Naive thymus-derived CD8-positive, alpha-beta T cell (primary cell): ENCODE measurements at regions of chr6 and their contacts with region 1.

Region 1: GRCh38 chr6:42984001-42984923 is at the start of gene PPP2R5D:
- DNase-seq: peak; percentile 86 to 99 (median 97)
- ATAC-seq: peak; percentile 93
- H3K4me3 Mint-ChIP-seq: peak within 1 kb of the TSS; percentile 91 to 99 (median 94)
- H3K27ac Mint-ChIP-seq: peak within 1 kb of the TSS; percentile 96 to 99 (median 97)
- H3K4me1 Mint-ChIP-seq: peaks cover 40 to 66% (median 62%) of the 10 kb centered on the region in 4 donors
- H3K27me3 Mint-ChIP-seq: no peaks in the 10 kb centered on the region
- polyA plus RNA-seq, gene PPP2R5D: 11.6 to 29.8 (median 17.6) TPM

Region 2: GRCh38 chr6:42970871-42971612 is 13.2 kb before region 1 on chr6:
- POLR2A ChIA-PET with region 1: interaction called, 18 read pairs
- DNase-seq: no peak
- ATAC-seq: no peak
- H3K4me3 Mint-ChIP-seq: no peak overlapping the region
- H3K27ac Mint-ChIP-seq: peak overlapping the region in 3 of 10 donors; percentile 49 to 53 (median 50)
- H3K4me1 Mint-ChIP-seq: peaks cover 9 to 25% (median 14%) of the 10 kb centered on the region in 4 donors
- H3K27me3 Mint-ChIP-seq: no peaks in the 10 kb centered on the region

Region 3: DNA sequence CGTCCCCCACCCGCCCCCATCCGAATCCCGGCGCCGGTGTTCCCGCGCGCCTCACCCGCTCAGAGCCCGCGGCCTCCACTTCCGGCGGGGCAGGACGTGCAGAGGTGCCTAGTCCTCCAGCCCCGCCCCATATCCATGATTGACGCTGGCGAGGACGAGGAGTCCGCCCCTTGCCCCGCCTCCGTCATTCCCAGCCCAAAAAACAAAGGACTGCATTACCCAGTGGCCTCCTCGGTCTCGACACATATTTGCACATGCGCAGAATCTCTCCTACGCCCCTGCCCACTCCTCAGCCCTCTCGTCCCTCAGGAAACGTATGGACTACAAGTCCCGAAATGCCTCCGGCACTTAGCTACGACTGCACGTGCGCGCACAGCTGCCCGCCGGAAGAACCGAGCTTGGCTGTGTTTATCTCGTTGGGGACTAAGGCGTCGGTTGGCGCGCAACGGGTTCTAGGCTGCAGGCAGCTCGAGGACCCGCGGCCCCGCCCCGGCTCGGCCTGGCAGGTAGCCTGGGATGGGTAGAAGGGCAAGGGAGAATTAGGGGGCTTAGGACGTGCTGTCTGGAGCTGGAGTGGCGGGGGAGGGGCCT is 29.7 kb after region 1 on chr6 and contains the starts of genes KLHDC3 and MEA1:
- POLR2A ChIA-PET with region 1: interaction called, 81 read pairs
- DNase-seq: peak; percentile 93 to 100 (median 99)
- ATAC-seq: peak; percentile 92
- H3K4me3 Mint-ChIP-seq: peak within 1 kb of the TSS; percentile 89 to 97 (median 94)
- H3K27ac Mint-ChIP-seq: peak within 1 kb of the TSS; percentile 82 to 98 (median 95)
- H3K4me1 Mint-ChIP-seq: peaks cover 52 to 82% (median 68%) of the 10 kb centered on the region in 4 donors
- H3K27me3 Mint-ChIP-seq: no peaks in the 10 kb centered on the region
- polyA plus RNA-seq, gene KLHDC3: 107 to 136 (median 117) TPM
- polyA plus RNA-seq, gene MEA1: 73.4 to 90.9 (median 77.5) TPM

Region 4: GRCh38 chr6:43021270-43022047 is 37.2 kb after region 1 on chr6 and contains the start of gene RRP36:
- POLR2A ChIA-PET with region 1: interaction called, 81 read pairs
- DNase-seq: peak; percentile 39 to 76 (median 58)
- ATAC-seq: peak; percentile 83 to 88
- H3K4me3 Mint-ChIP-seq: peak within 1 kb of the TSS; percentile 95 to 99 (median 98)
- H3K27ac Mint-ChIP-seq: peak within 1 kb of the TSS; percentile 68 to 97 (median 93)
- H3K4me1 Mint-ChIP-seq: peaks cover 34 to 50% (median 48%) of the 10 kb centered on the region in 4 donors
- H3K27me3 Mint-ChIP-seq: no peaks in the 10 kb centered on the region
- polyA plus RNA-seq, gene RRP36: 52.7 to 74.5 (median 57.8) TPM

Region 5: GRCh38 chr6:43053545-43054205 is 69.4 kb after region 1 on chr6 and contains the start of gene CUL7:
- POLR2A ChIA-PET with region 1: interaction called, 24 read pairs
- DNase-seq: peak; percentile 81 to 94 (median 86)
- ATAC-seq: peak; percentile 99
- H3K4me3 Mint-ChIP-seq: peak within 1 kb of the TSS; percentile 88 to 97 (median 94)
- H3K27ac Mint-ChIP-seq: peak within 1 kb of the TSS; percentile 80 to 98 (median 96)
- H3K4me1 Mint-ChIP-seq: peaks cover 34 to 54% (median 53%) of the 10 kb centered on the region in 4 donors
- H3K27me3 Mint-ChIP-seq: no peaks in the 10 kb centered on the region
- polyA plus RNA-seq, gene CUL7: 1.6 to 3.5 (median 1.6) TPM

Region 6: DNA sequence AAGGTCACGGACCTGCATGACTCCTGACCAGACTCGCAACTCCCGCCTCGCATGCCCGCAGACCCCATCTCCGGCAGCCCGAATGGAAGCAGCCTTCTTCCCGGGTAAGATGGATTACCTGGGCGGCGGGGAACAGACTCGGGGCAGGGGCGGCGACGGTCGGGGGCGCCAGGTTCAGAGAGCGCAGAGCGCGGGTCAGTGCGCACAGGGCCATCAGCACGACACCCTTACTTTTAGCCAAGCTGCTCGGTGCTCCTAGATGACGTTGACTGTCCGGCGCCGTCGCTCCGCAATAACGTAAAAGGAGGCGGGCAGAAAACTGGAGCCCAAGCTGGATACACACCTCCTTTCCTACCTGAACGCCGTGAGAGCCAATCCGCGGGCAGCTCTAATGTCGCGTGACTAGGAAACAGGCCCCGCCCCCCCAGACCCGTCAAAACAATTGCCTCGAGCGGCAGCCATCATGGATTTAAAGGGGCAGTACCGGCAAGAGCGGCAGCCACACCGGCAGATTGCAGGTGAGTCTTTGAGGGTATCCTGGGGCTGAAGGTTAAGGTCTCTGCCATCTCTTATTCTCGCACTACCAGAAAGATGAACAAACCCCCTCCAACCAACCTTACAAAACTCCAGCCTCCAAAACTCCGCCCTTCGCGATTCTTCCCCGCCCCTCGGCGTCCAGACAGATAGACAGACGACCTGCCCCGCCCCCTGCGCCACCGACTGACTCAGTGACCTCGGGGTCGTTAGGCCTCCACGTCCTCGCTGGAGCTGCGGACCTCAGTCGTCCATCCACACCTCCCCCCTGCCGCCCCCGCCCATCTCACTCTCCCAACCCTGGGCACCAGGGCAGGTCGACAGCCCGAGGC is 75.1 kb after region 1 on chr6 and contains the starts of genes KLC4 and MRPL2:
- POLR2A ChIA-PET with region 1: interaction called, 24 read pairs
- DNase-seq: peak; percentile 91 to 98 (median 96)
- ATAC-seq: peak; percentile 94 to 98
- H3K4me3 Mint-ChIP-seq: peak within 1 kb of the TSS; percentile 93 to 99 (median 95)
- H3K27ac Mint-ChIP-seq: peak within 1 kb of the TSS; percentile 96 to 100 (median 99)
- H3K4me1 Mint-ChIP-seq: peaks cover 17 to 49% (median 40%) of the 10 kb centered on the region in 4 donors
- H3K27me3 Mint-ChIP-seq: no peaks in the 10 kb centered on the region
- polyA plus RNA-seq, gene KLC4: 9.9 to 12.7 (median 10.9) TPM
- polyA plus RNA-seq, gene MRPL2: 40.7 to 69.9 (median 59.5) TPM